ENCODE measurements at regions of chr12 and their contacts with region 1.

Region 1: DNA sequence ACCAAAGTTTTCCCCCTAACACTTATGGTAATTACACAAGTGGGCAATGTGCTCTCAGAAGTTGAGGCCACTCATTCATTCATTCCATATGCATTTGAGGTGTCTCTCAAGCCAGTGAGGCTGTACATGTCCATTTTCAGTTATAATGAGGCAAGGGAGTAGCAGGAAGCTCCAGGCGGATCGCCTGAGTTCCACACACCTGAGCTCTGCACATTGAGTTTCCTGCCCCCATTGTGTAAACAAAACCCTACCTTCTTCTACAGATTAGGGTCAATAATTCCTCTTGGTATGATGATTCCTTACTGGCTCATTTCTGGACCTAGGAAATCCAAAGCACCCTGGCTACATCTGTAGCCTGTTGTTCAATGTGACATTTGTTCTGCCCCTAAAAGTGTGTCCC is 555.3 kb downstream of the MED13L start:
- DNase-seq: no peak
- H3K4me3 ChIP-seq: no peak overlapping the region
- H3K27ac ChIP-seq: no peak overlapping the region
- H3K4me1 ChIP-seq: no peaks in the 10 kb centered on the region
- H3K27me3 ChIP-seq: no peaks in the 10 kb centered on the region
- CTCF ChIP-seq: no peak

Region 2: DNA sequence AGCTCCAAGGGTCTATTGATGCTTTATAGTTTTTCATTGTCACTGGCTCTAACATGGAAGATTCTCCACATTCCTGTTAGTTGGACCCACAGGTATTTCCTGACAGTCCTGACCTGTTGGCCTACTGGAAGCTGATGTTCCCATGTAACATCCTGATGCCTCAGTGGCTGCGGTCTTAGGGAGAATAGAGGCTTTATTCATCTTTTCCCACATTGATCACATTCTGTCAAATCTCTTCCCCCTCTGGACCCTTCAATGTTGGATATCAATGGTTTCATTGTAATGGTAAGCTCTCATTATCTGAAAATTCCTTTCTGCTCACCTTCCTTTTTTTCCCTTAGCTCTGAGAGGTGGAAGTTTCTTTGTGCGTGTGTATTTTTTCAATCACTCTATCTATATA is 757.3 kb before region 1 on chr12:
- CTCF ChIA-PET with region 1: no interaction called
- POLR2A ChIA-PET with region 1: interaction called, 12 read pairs
- intact Hi-C with region 1: no loop called
- DNase-seq: no peak
- H3K4me3 ChIP-seq: no peak overlapping the region
- H3K27ac ChIP-seq: no peak overlapping the region
- H3K4me1 ChIP-seq: no peaks in the 10 kb centered on the region
- H3K27me3 ChIP-seq: no peaks in the 10 kb centered on the region
- CTCF ChIP-seq: no peak

Measured in A673 (cell line).